ENCODE measurements at regions of chr1 and their contacts with region 1.

Region 1: GRCh38 chr1:155250633-155251449 is 4.4 kb downstream of the ENTREP3 start:
- DNase-seq: peak; percentile 96
- CTCF ChIP-seq: peak; percentile 100

Region 2: GRCh38 chr1:155172732-155173477 is 77.9 kb before region 1 on chr1 and contains the start of gene KRTCAP2:
- CTCF ChIA-PET with region 1: interaction called, 14 read pairs
- POLR2A ChIA-PET with region 1: no interaction called
- DNase-seq: peak; percentile 97
- CTCF ChIP-seq: peak; percentile 98

Region 3: DNA sequence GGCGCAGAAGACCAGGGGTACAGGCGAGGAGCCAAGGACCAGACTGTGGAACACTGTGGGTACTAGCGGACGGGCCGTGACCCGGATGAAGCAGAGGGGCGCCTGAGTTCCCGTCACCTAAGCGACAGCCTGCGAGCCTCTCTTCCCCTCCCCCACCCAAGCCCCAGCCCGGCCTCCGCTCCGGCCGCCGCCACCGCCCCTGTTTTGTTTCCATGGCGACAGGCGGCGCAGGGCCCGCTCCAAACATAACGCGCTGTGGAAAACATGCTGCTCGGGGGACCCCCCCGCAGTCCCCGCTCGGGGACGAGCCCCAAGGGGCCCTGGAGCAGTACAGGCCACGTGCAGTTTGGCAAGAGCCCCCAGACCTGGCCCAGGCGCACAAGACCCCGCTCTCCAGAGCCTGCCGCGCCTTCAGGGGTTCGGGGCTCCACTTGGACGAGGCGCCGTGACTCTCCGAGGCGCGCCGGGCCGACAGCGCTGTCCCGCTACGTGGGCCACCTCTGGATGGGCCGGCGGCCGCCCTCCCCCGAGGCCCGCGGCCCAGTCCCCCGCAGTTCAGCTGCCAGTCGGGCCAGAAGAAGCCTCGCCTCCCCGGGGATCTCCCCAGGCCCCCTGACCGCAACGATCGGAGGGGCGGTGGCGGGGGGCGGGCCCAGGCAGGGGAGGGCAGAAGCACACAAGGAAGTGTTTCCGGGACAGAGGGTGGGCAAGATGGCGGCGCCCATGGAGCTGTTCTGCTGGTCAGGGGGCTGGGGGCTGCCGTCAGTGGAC is 42.1 kb before region 1 on chr1 and contains the start of gene MTX1:
- CTCF ChIA-PET with region 1: interaction called, 31 read pairs
- POLR2A ChIA-PET with region 1: no interaction called
- DNase-seq: peak; percentile 92
- CTCF ChIP-seq: no peak

Region 4: DNA sequence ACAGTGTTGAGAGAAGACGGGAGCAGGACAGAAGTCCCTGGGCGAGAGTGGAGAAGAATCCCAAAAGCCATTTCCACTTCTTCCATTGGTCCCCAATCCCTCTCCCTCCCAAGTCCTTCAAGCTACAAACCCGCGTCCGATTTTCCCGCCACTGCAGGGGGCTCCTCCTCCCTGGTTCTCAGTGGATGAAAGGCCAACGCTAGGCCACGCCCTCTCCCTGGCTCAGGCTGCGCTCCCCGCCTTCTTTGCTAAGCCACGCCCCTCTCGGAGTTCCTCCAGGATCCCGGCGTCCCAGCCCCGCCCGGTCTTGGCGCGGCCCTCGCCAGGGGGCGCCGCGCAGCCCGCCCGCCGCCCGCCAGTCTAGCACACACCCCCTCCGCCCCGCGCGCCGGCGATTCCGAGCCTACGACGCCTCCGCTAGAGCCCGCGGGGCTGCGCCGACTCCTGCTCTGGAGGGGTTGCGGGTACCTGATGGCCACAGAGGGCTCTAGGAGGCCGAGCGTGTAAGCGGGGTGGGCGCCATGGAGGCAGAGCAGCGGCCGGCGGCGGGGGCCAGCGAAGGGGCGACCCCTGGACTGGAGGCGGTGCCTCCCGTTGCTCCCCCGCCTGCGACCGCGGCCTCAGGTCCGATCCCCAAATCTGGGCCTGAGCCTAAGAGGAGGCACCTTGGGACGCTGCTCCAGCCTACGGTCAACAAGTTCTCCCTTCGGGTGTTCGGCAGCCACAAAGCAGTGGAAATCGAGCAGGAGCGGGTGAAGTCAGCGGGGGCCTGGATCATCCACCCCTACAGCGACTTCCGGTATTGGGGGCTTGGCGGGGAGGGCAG is 26.4 kb after region 1 on chr1 and contains the start of gene HCN3:
- CTCF ChIA-PET with region 1: interaction called, 154 read pairs
- POLR2A ChIA-PET with region 1: interaction called, 7 read pairs
- DNase-seq: peak; percentile 98
- CTCF ChIP-seq: peak; percentile 52

Region 5: GRCh38 chr1:155316922-155317321 is 66.1 kb after region 1 on chr1:
- CTCF ChIA-PET with region 1: interaction called, 150 read pairs
- POLR2A ChIA-PET with region 1: no interaction called
- DNase-seq: no peak
- CTCF ChIP-seq: no peak

Region 6: DNA sequence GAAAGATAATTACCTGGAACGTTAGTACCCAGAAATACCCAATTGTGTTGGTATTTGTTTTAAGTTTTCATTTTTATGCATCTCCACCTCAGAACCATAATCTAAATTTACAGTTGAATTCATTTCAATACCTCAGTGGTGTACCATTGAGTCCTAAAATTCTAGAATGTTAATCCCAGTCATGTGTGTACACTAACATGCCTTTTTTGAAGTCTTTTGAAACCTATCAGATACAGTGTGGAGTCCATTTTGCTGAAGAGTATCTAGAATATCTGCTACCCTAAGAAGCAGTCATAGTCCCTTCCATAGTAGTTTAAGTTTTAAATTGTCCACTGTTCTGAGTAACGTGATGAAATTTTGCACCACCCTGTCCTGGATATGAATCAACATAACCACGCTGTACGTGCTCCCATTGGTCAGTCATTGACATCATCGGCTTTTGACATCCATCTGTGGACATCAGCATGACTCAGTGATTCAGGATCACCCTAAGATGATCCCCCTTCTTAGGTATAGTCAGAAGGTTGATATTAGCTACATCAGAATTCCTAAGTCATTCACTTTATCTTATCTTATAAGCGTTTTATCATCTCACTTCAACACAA is 319.2 kb after region 1 on chr1:
- CTCF ChIA-PET with region 1: interaction called, 13 read pairs
- POLR2A ChIA-PET with region 1: no interaction called
- DNase-seq: no peak
- CTCF ChIP-seq: no peak

Measured in GM10248 (cell line).